WTC11 (cell line): ENCODE measurements at regions of chr15 and their contacts with region 1.

Region 1: DNA sequence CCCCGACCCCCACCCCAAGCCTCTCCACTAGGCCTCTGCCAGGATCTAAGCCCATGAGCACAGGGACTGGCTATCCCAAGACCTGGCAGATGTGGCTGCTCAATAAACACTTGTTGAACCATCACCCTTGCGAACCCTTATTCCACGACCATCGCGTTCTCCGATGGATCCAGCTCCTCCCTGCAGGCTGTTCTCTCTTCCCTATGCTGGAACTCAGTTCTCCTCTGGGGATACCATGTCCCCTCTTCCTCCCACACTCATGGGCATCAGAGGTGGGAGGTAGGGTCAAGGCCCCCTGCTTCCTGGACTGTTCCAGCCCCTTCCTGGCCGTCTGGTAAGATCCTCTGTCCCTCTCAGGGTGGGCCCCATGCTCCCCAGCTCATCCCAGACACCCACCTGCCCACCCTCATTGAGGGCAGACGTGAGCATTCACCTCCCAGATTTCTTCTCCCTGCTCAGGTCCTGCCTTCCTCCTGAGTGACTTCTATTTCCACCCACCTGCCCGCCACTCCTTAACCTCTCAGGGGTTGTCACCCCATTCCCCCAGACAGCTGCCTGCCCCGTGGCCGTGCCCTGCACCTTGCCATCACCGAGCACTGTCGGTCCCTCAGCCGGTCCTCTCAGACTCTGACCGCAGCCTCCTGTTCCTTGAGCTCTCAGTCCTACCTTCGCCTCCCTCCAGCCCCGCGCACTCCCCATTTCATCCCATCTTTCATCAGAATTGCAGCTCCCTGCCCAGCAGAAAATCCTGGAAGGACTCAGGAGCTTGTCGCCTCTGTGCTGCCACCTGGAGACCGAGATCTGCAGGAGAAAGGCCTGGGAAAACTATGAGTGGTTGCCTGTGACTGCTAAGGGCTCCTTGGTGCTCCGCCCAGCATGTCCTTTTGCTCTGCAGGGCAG is 42.0 kb downstream of the PML start:
- DNase-seq: peak; percentile 86
- ATAC-seq: peak; percentile 86
- H3K4me3 Mint-ChIP-seq: no peak overlapping the region
- H3K27ac Mint-ChIP-seq: peak overlapping the region; percentile 31
- H3K4me1 Mint-ChIP-seq: peaks cover 39% of the 10 kb centered on the region
- H3K27me3 Mint-ChIP-seq: no peaks in the 10 kb centered on the region
- CTCF ChIP-seq: peak; percentile 29; the same call in 1 of the 2 replicates

Region 2: GRCh38 chr15:73927476-73928240 is 108.9 kb before region 1 on chr15:
- CTCF ChIA-PET with region 1: interaction called, 11 read pairs
- POLR2A ChIA-PET with region 1: no interaction called
- DNase-seq: peak; percentile 74
- ATAC-seq: peak; percentile 38
- H3K4me3 Mint-ChIP-seq: peak overlapping the region; percentile 68
- H3K27ac Mint-ChIP-seq: no peak overlapping the region
- H3K4me1 Mint-ChIP-seq: peaks cover 43% of the 10 kb centered on the region
- H3K27me3 Mint-ChIP-seq: peaks cover 11% of the 10 kb centered on the region
- CTCF ChIP-seq: peak; percentile 33; the same call in 1 of the 2 replicates

Region 3: DNA sequence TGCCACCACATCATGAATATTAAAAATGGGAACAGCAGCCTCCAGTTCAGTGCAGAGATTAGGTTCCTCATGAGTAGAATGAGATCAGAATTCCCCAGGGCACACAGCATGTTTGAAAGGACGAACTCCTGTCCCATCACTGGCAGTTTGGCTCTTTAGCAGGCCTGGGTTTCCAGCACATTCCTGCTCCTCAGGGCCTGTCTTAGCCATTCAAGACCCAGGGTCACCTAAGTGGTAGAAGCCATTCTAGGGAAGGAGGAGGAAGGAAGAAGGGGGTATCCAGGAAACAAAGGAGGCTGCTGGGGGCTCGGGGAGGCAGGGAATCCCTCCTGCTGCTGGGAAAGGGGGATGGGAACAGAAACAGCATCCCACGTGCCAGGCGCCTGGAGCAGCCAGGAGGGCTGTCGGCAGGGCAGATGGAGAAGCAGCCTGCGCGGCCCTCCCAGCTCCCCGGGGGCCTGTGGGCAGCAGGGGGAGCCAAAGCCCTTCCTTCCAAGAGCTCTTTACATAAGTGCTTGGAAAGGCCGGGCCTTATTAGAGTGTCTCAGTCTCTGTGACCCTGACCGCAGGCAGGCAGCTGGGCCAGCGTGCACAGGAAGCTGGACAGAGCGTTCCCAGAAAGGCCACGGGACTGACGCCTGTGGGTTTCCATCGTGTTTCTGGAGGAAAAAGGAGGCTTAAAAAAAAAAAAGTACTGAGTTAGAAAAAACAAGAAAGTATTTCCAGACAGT is 85.5 kb before region 1 on chr15:
- CTCF ChIA-PET with region 1: interaction called, 32 read pairs
- POLR2A ChIA-PET with region 1: interaction called, 3 read pairs
- DNase-seq: peak; percentile 91
- ATAC-seq: peak; percentile 93
- H3K4me3 Mint-ChIP-seq: no peak overlapping the region
- H3K27ac Mint-ChIP-seq: peak overlapping the region; percentile 97
- H3K4me1 Mint-ChIP-seq: peaks cover 10% of the 10 kb centered on the region
- H3K27me3 Mint-ChIP-seq: peaks cover 3% of the 10 kb centered on the region; the same call in 1 of the 2 replicates
- CTCF ChIP-seq: peak; percentile 37; the same call in 1 of the 2 replicates

Region 4: DNA sequence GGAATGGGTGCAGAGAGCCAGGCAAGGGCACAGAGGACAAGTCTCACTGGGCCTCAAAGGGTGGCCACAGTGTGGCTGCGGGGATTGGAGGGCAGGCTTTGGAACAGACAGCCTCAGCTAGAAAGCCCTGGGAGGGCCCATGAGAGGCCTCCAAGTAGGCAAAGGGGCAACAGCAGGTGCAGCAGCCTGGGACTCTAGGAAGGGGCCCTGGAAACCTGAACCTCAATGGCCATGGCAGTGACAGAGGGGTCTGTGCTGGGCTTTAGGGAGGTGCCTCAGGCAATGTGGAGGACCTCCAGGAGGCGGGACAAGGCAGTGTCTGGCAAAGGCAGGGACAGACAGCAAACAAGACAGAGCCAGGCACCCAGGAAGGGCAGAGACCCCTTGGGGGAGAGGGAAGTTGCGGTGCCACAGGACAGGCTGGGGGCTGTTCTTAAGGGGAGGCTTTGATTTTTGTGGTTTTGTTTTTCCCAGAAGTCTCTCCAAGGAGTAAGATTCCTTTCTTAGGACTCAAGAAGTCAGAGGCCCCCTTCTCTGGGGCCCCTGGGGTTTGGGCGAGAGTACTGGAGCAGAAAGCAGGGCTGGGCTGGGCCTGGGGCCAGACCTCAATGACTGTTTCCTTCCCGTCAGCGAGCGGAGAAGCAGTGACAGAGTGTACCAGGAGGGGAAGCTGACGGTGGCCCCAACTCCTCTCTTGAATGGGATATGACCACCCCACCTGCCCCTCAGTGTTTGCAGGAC is 54.1 kb before region 1 on chr15:
- CTCF ChIA-PET with region 1: interaction called, 11 read pairs
- POLR2A ChIA-PET with region 1: no interaction called
- DNase-seq: no peak
- ATAC-seq: no peak
- H3K4me3 Mint-ChIP-seq: no peak overlapping the region
- H3K27ac Mint-ChIP-seq: no peak overlapping the region
- H3K4me1 Mint-ChIP-seq: no peaks in the 10 kb centered on the region
- H3K27me3 Mint-ChIP-seq: peaks cover 12% of the 10 kb centered on the region
- CTCF ChIP-seq: no peak

Region 5: GRCh38 chr15:74025436-74025835 is 11.1 kb before region 1 on chr15:
- CTCF ChIA-PET with region 1: interaction called, 43 read pairs
- POLR2A ChIA-PET with region 1: no interaction called
- DNase-seq: no peak
- ATAC-seq: no peak
- H3K4me3 Mint-ChIP-seq: no peak overlapping the region
- H3K27ac Mint-ChIP-seq: no peak overlapping the region
- H3K4me1 Mint-ChIP-seq: no peaks in the 10 kb centered on the region
- H3K27me3 Mint-ChIP-seq: no peaks in the 10 kb centered on the region
- CTCF ChIP-seq: no peak